PC-9 (cell line): ENCODE measurements at regions of chr5 and their contacts with region 1.

Region 1: GRCh38 chr5:90434116-90434714 is 24.7 kb upstream of the CETN3 start:
- DNase-seq: peak in 1 of 2 experiments; percentile 27
- H3K4me3 ChIP-seq: no peak overlapping the region
- H3K27ac ChIP-seq: no peak overlapping the region
- H3K4me1 ChIP-seq: peaks cover 19% of the 10 kb centered on the region
- H3K27me3 ChIP-seq: no peaks in the 10 kb centered on the region
- CTCF ChIP-seq: peak; percentile 56

Region 2: DNA sequence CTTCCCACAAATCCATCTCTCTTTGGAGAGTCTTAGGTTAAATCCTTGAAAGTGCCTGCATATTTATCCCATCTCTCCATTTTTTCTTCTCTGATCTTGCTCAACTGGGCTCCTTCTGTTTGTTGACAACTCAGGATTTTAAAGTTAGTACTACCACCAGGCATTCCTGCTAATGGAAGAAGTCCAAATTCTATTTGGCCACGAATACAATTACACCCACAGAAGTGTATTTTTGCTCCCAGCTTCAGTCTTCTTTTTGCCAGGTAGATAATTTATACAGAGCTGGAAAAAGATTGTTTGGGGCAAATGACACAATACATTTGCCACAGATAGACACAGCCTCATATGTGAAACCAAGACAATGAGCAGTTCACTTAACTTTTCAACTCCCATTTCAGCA is 99.5 kb before region 1 on chr5:
- CTCF ChIA-PET with region 1: no interaction called
- POLR2A ChIA-PET with region 1: no interaction called
- intact Hi-C with region 1: no loop called
- DNase-seq: no peak
- H3K4me3 ChIP-seq: no peak overlapping the region
- H3K27ac ChIP-seq: no peak overlapping the region
- H3K4me1 ChIP-seq: no peaks in the 10 kb centered on the region
- H3K27me3 ChIP-seq: no peaks in the 10 kb centered on the region
- CTCF ChIP-seq: no peak

Region 3: GRCh38 chr5:90409318-90410177 is 24.7 kb before region 1 on chr5 and contains the start of gene CETN3:
- CTCF ChIA-PET with region 1: interaction called, 4 read pairs
- POLR2A ChIA-PET with region 1: no interaction called
- intact Hi-C with region 1: loop called (anchors 1 kb)
- DNase-seq: peak; percentile 90 to 92
- H3K4me3 ChIP-seq: peak within 1 kb of the TSS; percentile 92
- H3K27ac ChIP-seq: peak within 1 kb of the TSS; percentile 82
- H3K4me1 ChIP-seq: peaks cover 29% of the 10 kb centered on the region; the same call in 1 of the 2 replicates
- H3K27me3 ChIP-seq: no peaks in the 10 kb centered on the region
- CTCF ChIP-seq: no peak
- total RNA-seq, gene CETN3: 29.3 and 35.6 TPM in 2 replicates

Region 4: DNA sequence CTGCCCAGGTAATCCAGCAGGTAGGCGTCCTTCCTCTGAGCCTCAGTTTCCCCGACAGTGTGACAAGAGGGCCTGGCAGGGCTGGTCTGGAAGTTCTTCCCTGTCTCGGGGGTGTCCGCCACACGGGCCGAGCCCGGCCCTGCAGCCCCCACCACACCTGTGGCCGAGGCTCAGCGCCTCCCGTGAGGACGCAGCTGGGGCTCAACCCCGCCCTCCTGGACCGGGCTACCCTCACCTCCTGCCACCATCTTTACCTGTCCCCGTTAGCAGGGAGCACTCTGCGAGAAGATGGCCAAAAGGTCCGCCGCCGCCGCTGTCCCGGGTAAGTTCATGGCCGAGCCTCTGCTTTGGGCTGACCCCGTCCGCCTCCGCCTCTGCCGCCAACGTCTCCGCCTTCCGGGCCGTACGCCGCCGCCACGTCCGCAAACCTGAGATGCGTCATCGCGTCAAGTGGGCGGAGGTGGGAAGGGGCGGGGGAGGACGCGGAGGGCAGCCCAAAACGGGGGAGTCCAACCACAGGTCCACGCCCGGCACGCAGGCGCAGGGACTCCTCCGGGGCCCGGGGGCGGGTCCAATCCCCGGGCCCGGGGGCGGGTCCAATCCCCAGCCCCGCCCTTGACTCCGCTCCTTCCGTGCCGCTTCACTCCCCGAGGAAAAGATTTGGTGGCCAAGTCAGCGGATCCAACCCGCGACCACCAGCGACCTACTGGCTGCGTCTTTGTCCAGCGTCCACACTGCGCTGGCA is 95.2 kb after region 1 on chr5 and contains the start of gene LYSMD3:
- CTCF ChIA-PET with region 1: no interaction called
- POLR2A ChIA-PET with region 1: no interaction called
- intact Hi-C with region 1: loop called (anchors 1 kb)
- DNase-seq: peak; percentile 91 to 95
- H3K4me3 ChIP-seq: peak within 1 kb of the TSS; percentile 82
- H3K27ac ChIP-seq: peak within 1 kb of the TSS; percentile 54
- H3K4me1 ChIP-seq: peaks cover 15% of the 10 kb centered on the region
- H3K27me3 ChIP-seq: peaks cover 4% of the 10 kb centered on the region; the same call in 1 of the 2 replicates
- CTCF ChIP-seq: no peak
- total RNA-seq, gene LYSMD3: 4.6 and 10.6 TPM in 2 replicates

Region 5: GRCh38 chr5:90606539-90606938 is 172.3 kb after region 1 on chr5:
- CTCF ChIA-PET with region 1: no interaction called
- POLR2A ChIA-PET with region 1: no interaction called
- intact Hi-C with region 1: loop called (anchors 2 kb)
- DNase-seq: no peak
- H3K4me3 ChIP-seq: no peak overlapping the region
- H3K27ac ChIP-seq: no peak overlapping the region
- H3K4me1 ChIP-seq: no peaks in the 10 kb centered on the region
- H3K27me3 ChIP-seq: no peaks in the 10 kb centered on the region
- CTCF ChIP-seq: peak; percentile 50; the same call in 1 of the 2 replicates